PC-9 (cell line): ENCODE measurements at regions of chr6 and their contacts with region 1.

Region 1: GRCh38 chr6:113122060-113122459 is 735.1 kb upstream of the MARCKS start:
- DNase-seq: peak; percentile 62 to 95
- H3K4me3 ChIP-seq: peak overlapping the region; percentile 6; the same call in 1 of the 2 replicates
- H3K27ac ChIP-seq: peak overlapping the region; percentile 93
- H3K4me1 ChIP-seq: peaks cover 57% of the 10 kb centered on the region
- H3K27me3 ChIP-seq: no peaks in the 10 kb centered on the region
- CTCF ChIP-seq: peak; percentile 63

Region 2: DNA sequence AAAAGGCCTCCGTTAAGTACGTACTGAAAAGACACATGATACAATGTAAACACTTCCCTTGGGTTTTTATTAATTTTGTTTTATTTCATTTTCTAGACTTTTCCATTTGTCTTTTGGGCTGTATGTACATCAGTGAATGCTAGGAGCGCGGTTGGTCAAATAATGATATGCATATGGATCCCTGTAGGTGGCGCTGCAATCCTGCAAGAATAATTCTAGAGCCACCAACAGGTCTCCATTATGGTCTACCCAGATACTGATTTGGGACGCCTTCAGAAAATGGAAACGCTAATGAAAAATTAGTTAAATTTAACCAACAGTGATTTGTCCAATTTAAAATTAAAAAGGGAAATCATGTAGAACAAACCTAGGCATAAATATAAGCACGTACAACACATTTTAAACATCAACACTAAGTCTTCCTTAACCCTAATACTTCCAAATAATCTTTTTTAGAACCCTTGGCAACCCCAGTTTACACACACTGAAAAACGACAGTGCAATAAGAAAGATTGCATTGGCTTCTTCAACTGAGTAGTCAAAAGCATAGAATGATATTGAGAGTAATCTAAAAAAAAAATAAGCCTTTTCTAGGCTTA is 341.5 kb before region 1 on chr6:
- CTCF ChIA-PET with region 1: interaction called, 4 read pairs
- POLR2A ChIA-PET with region 1: interaction called, 6 read pairs
- intact Hi-C with region 1: loop called (anchors 1 kb)
- DNase-seq: peak; percentile 44 to 55
- H3K4me3 ChIP-seq: no peak overlapping the region
- H3K27ac ChIP-seq: no peak overlapping the region
- H3K4me1 ChIP-seq: no peaks in the 10 kb centered on the region
- H3K27me3 ChIP-seq: no peaks in the 10 kb centered on the region
- CTCF ChIP-seq: peak; percentile 82

Region 3: DNA sequence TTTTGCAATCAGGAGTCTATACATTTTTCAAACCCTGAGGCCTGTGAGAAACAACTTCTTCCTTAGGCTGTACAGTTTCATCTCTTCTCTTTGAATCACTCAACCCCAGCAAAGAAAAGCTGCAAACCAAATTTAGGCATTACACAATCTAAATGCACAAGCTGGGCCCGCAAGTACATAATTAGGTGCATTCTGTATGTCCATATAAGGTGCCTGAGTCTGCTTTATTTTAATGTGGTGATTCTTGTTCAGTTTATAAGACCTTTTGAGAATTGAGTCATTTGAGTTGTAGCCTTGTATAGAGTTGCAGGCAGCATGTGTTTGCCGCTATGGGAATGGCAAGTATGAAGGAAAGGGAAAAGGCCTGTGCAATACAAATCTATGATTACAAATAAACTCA is 25.5 kb after region 1 on chr6:
- CTCF ChIA-PET with region 1: no interaction called
- POLR2A ChIA-PET with region 1: no interaction called
- intact Hi-C with region 1: no loop called
- DNase-seq: no peak
- H3K4me3 ChIP-seq: no peak overlapping the region
- H3K27ac ChIP-seq: no peak overlapping the region
- H3K4me1 ChIP-seq: no peaks in the 10 kb centered on the region
- H3K27me3 ChIP-seq: no peaks in the 10 kb centered on the region
- CTCF ChIP-seq: no peak

Region 4: DNA sequence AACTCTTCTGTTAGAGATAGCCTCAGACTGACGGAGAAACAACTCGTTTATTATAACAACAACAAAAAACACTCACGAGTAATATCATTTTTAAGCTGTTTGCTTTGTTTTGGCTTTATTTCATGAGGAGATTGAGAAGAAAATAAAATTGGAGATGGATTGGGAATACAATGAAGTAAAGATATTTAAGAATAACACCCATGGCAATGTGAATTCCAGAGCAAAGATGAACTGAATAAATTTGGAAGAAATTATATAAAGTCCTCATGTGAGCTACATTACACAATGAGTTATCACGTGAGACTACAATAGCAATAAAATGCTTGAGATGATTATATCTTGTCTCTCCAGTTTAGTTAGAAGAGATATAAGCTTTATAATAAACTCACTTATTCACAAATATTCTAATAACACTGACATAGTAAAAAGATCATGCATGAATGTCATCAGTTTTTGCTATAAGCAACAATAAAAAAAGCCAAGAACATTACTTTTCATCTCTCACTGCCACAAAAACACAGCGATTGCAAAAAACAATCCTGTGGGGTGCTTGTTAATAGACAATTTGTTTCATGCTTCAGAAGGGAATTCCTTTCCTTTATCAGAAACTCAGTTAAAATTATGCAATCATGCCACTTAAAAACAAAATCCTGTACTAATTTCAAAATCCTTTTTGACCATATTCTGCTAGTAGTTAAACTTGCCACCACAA is 38.4 kb after region 1 on chr6:
- CTCF ChIA-PET with region 1: no interaction called
- POLR2A ChIA-PET with region 1: no interaction called
- intact Hi-C with region 1: no loop called
- DNase-seq: no peak
- H3K4me3 ChIP-seq: no peak overlapping the region
- H3K27ac ChIP-seq: no peak overlapping the region
- H3K4me1 ChIP-seq: no peaks in the 10 kb centered on the region
- H3K27me3 ChIP-seq: no peaks in the 10 kb centered on the region
- CTCF ChIP-seq: no peak

Region 5: GRCh38 chr6:113306552-113307145 is 184.6 kb after region 1 on chr6:
- CTCF ChIA-PET with region 1: no interaction called
- POLR2A ChIA-PET with region 1: no interaction called
- intact Hi-C with region 1: loop called (anchors 10 kb)
- DNase-seq: peak in 1 of 2 experiments; percentile 42
- H3K4me3 ChIP-seq: no peak overlapping the region
- H3K27ac ChIP-seq: no peak overlapping the region
- H3K4me1 ChIP-seq: no peaks in the 10 kb centered on the region
- H3K27me3 ChIP-seq: no peaks in the 10 kb centered on the region
- CTCF ChIP-seq: peak; percentile 69

Region 6: GRCh38 chr6:113414511-113414910 is 292.5 kb after region 1 on chr6:
- CTCF ChIA-PET with region 1: no interaction called
- POLR2A ChIA-PET with region 1: no interaction called
- intact Hi-C with region 1: loop called (anchors 1 kb)
- DNase-seq: peak; percentile 35 to 66
- H3K4me3 ChIP-seq: no peak overlapping the region
- H3K27ac ChIP-seq: no peak overlapping the region
- H3K4me1 ChIP-seq: peaks cover 30% of the 10 kb centered on the region
- H3K27me3 ChIP-seq: no peaks in the 10 kb centered on the region
- CTCF ChIP-seq: peak; percentile 67; the same call in 1 of the 2 replicates

Region 7: DNA sequence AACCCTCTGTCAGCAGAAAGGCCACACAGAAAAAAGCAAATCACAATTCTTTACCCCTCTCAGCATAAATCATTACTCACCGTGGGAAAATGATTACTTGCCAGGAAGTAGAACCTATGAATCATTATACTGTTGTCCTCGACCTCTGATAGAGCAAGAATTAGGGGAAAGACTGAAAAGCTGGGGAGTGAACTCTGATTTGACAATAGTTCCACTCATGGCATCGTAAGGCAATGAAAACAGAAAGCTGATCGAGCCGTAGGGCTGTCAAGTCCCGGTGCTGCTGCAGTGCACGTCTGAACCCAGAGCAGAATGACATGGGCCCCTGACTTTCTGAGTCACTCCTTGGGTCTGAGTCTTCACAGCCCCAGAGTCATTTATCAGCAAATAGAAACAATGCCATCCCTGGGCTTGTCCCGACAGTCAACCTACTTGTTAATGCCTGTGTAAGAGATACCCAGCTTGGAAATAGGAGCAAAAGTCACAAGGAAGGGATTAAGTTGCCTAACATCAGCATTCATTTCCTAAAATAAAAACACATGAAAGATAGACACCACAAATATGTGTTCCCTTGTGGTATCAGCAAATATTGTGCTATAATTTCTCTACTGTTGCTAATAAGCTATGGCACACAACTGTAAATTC is 510.3 kb after region 1 on chr6:
- CTCF ChIA-PET with region 1: no interaction called
- POLR2A ChIA-PET with region 1: no interaction called
- intact Hi-C with region 1: loop called (anchors 1 kb)
- DNase-seq: peak; percentile 74 to 100
- H3K4me3 ChIP-seq: peak overlapping the region; percentile 27; the same call in 1 of the 2 replicates
- H3K27ac ChIP-seq: peak overlapping the region; percentile 99
- H3K4me1 ChIP-seq: peaks cover 68% of the 10 kb centered on the region
- H3K27me3 ChIP-seq: no peaks in the 10 kb centered on the region
- CTCF ChIP-seq: no peak

Region 8: DNA sequence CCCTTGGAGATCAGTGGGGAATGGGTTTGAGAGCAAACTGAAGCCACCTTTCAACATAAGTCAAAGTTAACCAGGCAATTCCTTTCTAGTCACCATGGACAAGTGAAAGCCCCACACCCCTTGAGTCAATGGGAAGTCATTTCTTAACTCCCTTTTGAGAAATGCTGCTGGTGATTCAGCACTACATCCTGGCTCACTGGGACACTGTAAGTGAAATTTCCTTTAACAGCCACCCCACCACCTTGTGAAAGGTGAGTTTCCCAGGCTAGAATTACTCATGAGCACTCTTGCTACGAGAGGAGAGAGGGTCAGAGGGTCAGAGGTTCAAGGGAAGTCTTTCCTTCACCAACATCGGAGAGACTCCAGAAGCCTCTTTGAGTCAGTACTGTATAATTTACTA is 641.8 kb after region 1 on chr6:
- CTCF ChIA-PET with region 1: no interaction called
- POLR2A ChIA-PET with region 1: no interaction called
- intact Hi-C with region 1: loop called (anchors 5 kb)
- DNase-seq: peak; percentile 43 to 99
- H3K4me3 ChIP-seq: peak overlapping the region; percentile 18; the same call in 1 of the 2 replicates
- H3K27ac ChIP-seq: peak overlapping the region; percentile 97
- H3K4me1 ChIP-seq: peaks cover 38% of the 10 kb centered on the region
- H3K27me3 ChIP-seq: no peaks in the 10 kb centered on the region
- CTCF ChIP-seq: no peak